Calu3 (cell line): ENCODE measurements at regions of chr1 and their contacts with region 1.

Region 1: GRCh38 chr1:220733090-220733601 is 15.0 kb upstream of the MTARC2 start:
- DNase-seq: peak; percentile 89
- H3K4me3 Mint-ChIP-seq: no peak overlapping the region
- H3K27ac Mint-ChIP-seq: no peak overlapping the region
- H3K4me1 Mint-ChIP-seq: peaks cover 24% of the 10 kb centered on the region
- H3K27me3 Mint-ChIP-seq: no peaks in the 10 kb centered on the region
- CTCF ChIP-seq: peak; percentile 77

Region 2: DNA sequence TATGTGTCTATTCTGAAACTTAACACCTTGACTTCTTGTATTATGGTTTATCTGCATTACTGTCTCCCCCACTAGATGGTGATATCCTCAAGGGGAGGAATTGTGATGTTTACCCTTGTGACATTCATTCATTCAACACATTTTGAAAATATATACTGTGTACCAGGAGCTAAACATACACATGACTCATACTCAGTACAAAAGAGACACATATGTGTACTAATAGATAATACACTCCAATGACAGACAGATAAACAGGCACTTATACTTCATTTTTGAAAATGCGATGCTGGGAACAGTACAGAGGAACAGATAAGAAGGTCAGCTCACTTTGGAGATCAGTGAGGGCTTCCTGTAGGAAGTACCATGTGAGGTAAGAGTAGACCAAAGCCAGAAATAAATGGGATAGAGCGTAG is 452.0 kb before region 1 on chr1:
- CTCF ChIA-PET with region 1: interaction called, 13 read pairs
- intact Hi-C with region 1: loop called (anchors 2 kb)
- DNase-seq: peak; percentile 8
- H3K4me3 Mint-ChIP-seq: no peak overlapping the region
- H3K27ac Mint-ChIP-seq: no peak overlapping the region
- H3K4me1 Mint-ChIP-seq: no peaks in the 10 kb centered on the region
- H3K27me3 Mint-ChIP-seq: peaks cover 8% of the 10 kb centered on the region
- CTCF ChIP-seq: no peak

Region 3: GRCh38 chr1:220294846-220295301 is 438.3 kb before region 1 on chr1:
- CTCF ChIA-PET with region 1: interaction called, 21 read pairs
- intact Hi-C with region 1: no loop called
- DNase-seq: no peak
- H3K4me3 Mint-ChIP-seq: no peak overlapping the region
- H3K27ac Mint-ChIP-seq: no peak overlapping the region
- H3K4me1 Mint-ChIP-seq: no peaks in the 10 kb centered on the region
- H3K27me3 Mint-ChIP-seq: peaks cover 10% of the 10 kb centered on the region
- CTCF ChIP-seq: no peak

Region 4: DNA sequence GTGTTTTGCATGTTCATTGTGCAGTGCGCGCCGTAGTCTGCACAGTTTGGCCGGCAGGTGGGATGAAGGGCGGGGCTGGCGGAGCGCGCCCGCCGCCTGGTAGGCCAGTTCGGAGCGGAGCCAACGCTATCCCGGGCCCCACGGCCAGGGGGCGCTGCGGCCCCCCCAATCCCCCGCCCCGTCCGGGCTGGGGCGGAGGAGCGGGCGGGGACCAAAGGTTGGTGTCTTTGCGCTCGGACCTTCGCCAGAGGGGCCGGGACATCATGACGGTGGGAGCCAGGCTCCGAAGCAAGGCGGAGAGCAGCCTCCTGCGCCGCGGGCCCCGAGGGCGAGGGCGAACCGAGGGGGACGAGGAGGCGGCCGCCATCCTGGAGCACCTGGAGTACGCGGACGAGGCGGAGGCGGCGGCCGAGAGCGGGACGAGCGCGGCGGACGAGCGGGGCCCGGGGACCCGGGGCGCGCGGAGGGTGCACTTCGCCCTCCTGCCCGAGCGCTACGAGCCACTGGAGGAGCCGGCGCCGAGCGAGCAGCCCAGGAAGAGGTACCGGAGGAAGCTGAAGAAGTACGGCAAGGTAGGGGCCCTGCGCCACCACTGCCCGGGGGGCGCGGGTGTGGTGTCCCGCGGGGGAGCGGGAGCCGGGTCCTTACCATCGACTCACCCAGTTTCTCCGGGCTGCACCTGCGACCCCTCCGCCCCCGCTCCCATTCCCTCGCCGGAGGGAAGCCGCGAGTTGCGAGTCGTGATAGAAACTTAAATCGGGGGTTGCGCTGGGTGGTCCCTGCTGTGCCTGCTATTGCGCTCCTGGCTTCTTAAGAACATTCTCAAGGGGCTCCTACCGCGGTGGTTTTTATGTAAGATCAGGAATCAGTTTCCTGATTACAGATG is 42.8 kb before region 1 on chr1 and contains the start of gene C1orf115:
- CTCF ChIA-PET with region 1: interaction called, 8 read pairs
- intact Hi-C with region 1: loop called (anchors 2 kb)
- DNase-seq: peak; percentile 94
- H3K4me3 Mint-ChIP-seq: peak within 1 kb of the TSS; percentile 95
- H3K27ac Mint-ChIP-seq: peak within 1 kb of the TSS; percentile 71
- H3K4me1 Mint-ChIP-seq: peaks cover 9% of the 10 kb centered on the region
- H3K27me3 Mint-ChIP-seq: no peaks in the 10 kb centered on the region
- CTCF ChIP-seq: peak; percentile 99
- total RNA-seq, gene C1orf115: 5.1 and 8.5 TPM in 2 replicates

Region 5: DNA sequence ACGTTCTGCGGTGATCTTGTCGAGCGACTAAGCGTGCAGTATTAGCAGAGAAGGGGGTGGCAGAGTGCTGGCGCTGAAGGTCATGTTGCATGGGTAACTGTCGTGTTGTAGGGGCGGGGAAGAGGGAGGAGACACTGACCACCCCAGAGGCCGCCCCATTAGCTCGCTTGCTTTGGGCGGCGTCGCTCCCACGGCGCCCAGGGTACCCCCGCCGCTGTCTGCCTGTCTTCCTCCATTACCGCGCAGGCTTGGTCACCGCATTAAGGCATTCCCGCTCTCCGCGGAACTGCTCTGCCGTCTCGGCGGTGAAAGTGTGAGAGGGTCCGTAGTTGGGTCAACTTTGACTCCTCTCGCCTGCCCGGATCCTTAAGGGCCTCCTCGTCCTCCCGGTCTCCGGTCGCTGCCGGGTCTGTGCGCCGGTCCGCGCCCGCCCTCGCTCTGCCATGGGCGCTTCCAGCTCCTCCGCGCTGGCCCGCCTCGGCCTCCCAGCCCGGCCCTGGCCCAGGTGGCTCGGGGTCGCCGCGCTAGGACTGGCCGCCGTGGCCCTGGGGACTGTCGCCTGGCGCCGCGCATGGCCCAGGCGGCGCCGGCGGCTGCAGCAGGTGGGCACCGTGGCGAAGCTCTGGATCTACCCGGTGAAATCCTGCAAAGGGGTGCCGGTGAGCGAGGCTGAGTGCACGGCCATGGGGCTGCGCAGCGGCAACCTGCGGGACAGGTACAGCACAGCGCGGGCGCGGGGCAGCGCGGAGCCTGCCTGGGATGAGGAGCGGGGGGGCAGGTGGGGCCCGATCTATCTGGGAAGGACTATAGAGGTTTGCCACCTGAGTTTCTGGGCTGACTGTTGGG is 15.2 kb after region 1 on chr1 and contains the start of gene MTARC2:
- CTCF ChIA-PET with region 1: interaction called, 26 read pairs
- intact Hi-C with region 1: loop called (anchors 1 kb)
- DNase-seq: peak; percentile 77
- H3K4me3 Mint-ChIP-seq: peak within 1 kb of the TSS; percentile 91
- H3K27ac Mint-ChIP-seq: peak within 1 kb of the TSS; percentile 66
- H3K4me1 Mint-ChIP-seq: peaks cover 25% of the 10 kb centered on the region
- H3K27me3 Mint-ChIP-seq: no peaks in the 10 kb centered on the region
- CTCF ChIP-seq: no peak
- total RNA-seq, gene MTARC2: 9.1 and 16.4 TPM in 2 replicates

Region 6: DNA sequence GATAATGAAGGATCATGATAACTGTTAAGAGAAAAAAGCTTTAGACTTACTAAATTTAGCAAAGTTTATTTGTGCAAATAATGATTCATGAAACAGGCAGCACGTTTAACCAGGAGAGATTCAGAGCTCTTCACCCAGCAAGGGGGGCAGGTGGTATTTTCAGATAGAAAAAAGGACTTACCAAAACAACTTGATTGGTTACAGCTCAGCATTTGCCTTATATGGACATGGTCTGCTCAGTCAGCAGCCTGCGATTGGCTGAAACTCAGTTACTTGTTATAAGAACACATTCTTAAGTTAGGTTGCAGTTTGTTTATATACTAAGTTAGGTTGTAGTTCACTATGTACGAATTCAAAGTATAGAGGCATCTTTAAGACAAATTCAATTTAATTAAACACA is 843.1 kb after region 1 on chr1:
- CTCF ChIA-PET with region 1: no interaction called
- intact Hi-C with region 1: no loop called
- DNase-seq: no peak
- H3K4me3 Mint-ChIP-seq: no peak overlapping the region
- H3K27ac Mint-ChIP-seq: no peak overlapping the region
- H3K4me1 Mint-ChIP-seq: peaks cover 8% of the 10 kb centered on the region
- H3K27me3 Mint-ChIP-seq: no peaks in the 10 kb centered on the region
- CTCF ChIP-seq: no peak